AG04449 (cell line): ENCODE measurements at regions of chr5 and their contacts with region 1.

Region 1: DNA sequence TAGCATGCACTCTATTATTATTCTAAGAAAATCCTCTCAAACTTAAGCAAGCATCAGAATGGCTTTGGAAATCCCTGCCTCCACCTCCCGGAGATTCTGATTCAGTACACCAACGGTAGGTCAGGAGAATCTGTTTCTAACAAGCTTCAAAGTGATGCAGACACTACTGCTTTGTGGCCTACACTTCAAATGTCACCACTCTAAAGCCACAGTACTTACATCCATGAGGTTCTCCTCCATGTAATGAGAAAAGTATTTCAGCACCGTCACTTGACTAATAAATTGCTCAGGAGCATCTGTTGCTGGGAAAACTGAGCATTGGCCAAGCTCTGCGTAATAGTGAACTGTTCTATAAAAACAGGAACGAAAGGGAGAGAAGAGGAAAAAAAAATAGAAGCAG is 4.8 kb downstream of the PLK2 start:
- DNase-seq: no peak
- H3K4me3 ChIP-seq: peak overlapping the region; percentile 88
- CTCF ChIP-seq: no peak

Region 2: DNA sequence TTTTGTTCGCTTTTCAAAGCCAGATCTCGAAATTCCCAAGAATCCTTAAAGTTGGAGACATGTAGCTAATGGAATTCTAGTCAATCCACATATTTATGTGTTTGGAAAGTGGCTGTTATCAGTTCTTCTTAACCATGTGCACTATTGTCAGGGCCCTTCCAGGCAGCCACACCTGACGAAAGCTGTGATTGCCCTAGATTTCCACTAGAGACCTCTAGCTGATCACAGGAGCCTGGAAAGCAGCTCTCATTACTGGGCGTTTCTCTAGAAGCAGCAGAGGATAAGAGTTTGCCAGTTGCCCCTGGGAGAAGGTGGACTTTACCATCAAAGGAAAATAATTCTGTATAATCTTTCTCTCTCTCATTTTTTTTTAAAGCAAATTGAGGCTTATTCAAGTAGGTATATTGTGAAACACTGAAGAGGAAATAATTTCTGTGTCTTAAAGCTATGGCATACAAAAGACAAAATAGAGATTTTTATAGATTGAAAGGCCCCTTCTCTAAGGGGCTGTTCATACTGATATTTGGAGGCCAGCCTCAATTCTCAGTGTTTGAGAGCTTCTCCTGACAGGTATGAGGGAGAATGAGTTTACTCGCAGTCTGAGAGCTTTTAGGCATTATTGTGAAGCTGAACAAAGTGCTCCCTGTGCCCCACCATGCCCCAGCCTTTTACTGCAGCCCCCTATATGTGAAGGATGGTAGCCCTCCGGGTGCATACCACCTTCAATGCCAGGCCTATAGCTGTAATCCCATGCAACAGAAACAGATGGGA is 567.0 kb before region 1 on chr5:
- CTCF ChIA-PET with region 1: interaction called, 51 read pairs
- POLR2A ChIA-PET with region 1: interaction called, 17 read pairs
- DNase-seq: no peak
- H3K4me3 ChIP-seq: no peak overlapping the region
- CTCF ChIP-seq: peak; percentile 60